B cell (primary cell): ENCODE measurements at regions of chr3 and their contacts with region 1.

Region 1: GRCh38 chr3:36957862-36958686 is 13.2 kb upstream of the TRANK1 start:
- DNase-seq: no peak
- ATAC-seq: no peak
- H3K4me3 ChIP-seq: no peak overlapping the region
- H3K4me3 Mint-ChIP-seq: no peak overlapping the region
- H3K27ac ChIP-seq: no peak overlapping the region
- H3K27ac Mint-ChIP-seq: peak overlapping the region; percentile 51
- H3K4me1 ChIP-seq: peaks cover 0 to 4% of the 10 kb centered on the region in 2 donors
- H3K4me1 Mint-ChIP-seq: peaks cover 13% of the 10 kb centered on the region
- H3K27me3 ChIP-seq: no peaks in the 10 kb centered on the region
- H3K27me3 Mint-ChIP-seq: no peaks in the 10 kb centered on the region
- CTCF ChIP-seq: no peak

Region 2: GRCh38 chr3:36792342-36792741 is 165.7 kb before region 1 on chr3:
- CTCF ChIA-PET with region 1: interaction called, 5 read pairs
- POLR2A ChIA-PET with region 1: no interaction called
- intact Hi-C with region 1: loop called (anchors 1 kb)
- DNase-seq: peak; percentile 25
- ATAC-seq: no peak
- H3K4me3 ChIP-seq: no peak overlapping the region
- H3K4me3 Mint-ChIP-seq: no peak overlapping the region
- H3K27ac ChIP-seq: no peak overlapping the region
- H3K27ac Mint-ChIP-seq: no peak overlapping the region
- H3K4me1 ChIP-seq: no peaks in the 10 kb centered on the region
- H3K4me1 Mint-ChIP-seq: no peaks in the 10 kb centered on the region
- H3K27me3 ChIP-seq: no peaks in the 10 kb centered on the region
- H3K27me3 Mint-ChIP-seq: peaks cover 9% of the 10 kb centered on the region
- CTCF ChIP-seq: no peak

Region 3: GRCh38 chr3:36868614-36869436 is 89.2 kb before region 1 on chr3:
- CTCF ChIA-PET with region 1: interaction called, 84 read pairs
- POLR2A ChIA-PET with region 1: interaction called, 3 read pairs
- intact Hi-C with region 1: loop called (anchors 1 kb)
- DNase-seq: peak; percentile 77
- ATAC-seq: peak; percentile 73
- H3K4me3 ChIP-seq: no peak overlapping the region
- H3K4me3 Mint-ChIP-seq: no peak overlapping the region
- H3K27ac ChIP-seq: no peak overlapping the region
- H3K27ac Mint-ChIP-seq: peak overlapping the region; percentile 0
- H3K4me1 ChIP-seq: peaks cover 5 to 13% of the 10 kb centered on the region in 2 donors
- H3K4me1 Mint-ChIP-seq: peaks cover 22% of the 10 kb centered on the region
- H3K27me3 ChIP-seq: no peaks in the 10 kb centered on the region
- H3K27me3 Mint-ChIP-seq: no peaks in the 10 kb centered on the region
- CTCF ChIP-seq: peak; percentile 90

Region 4: DNA sequence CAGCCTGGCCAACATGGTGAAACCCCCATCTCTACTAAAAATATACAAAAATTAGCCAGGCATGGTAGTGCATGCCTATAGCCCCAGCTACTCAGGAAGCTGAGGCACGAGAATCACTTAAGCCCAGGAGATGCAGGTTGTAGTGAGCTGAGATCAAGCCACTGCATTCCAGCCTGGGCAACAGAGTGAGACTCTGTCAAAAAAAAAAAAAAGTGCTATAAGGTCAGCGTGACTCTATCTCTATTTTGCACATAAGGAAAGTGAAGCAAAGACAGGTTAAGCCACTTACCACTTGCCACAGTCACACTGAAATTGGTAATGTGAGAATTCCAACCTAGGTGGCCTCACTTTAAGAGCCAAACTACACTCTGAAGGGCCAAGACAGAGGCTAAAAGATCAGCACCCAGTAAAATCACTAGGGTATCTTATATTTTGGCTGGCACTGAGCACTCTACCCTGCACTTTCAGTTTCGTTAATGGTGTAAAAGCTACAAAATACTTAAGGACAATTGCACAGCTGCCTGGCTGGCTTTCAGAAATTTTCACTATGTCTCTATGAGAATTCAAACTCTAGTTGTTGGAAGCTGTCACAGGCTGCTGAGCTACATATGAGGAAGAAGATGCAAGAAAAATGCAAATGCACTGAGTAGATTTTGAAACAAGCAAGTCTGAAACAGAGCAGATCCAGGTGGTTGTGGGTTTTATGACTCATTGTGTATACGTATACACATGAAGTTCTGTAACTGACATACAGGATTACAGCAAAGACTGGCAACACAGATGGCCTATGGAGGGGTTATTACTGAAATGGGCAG is 45.9 kb before region 1 on chr3:
- CTCF ChIA-PET with region 1: interaction called, 128 read pairs
- POLR2A ChIA-PET with region 1: interaction called, 5 read pairs
- intact Hi-C with region 1: loop called (anchors 1 kb)
- DNase-seq: peak; percentile 88
- ATAC-seq: peak; percentile 83
- H3K4me3 ChIP-seq: peak overlapping the region in 4 of 5 experiments; percentile 9 to 35 (median 18)
- H3K4me3 Mint-ChIP-seq: peak overlapping the region; percentile 35
- H3K27ac ChIP-seq: peak overlapping the region; percentile 90 to 91
- H3K27ac Mint-ChIP-seq: peak overlapping the region; percentile 84
- H3K4me1 ChIP-seq: peaks cover 35 to 51% of the 10 kb centered on the region in 2 donors
- H3K4me1 Mint-ChIP-seq: peaks cover 53% of the 10 kb centered on the region
- H3K27me3 ChIP-seq: no peaks in the 10 kb centered on the region
- H3K27me3 Mint-ChIP-seq: no peaks in the 10 kb centered on the region
- CTCF ChIP-seq: no peak

Region 5: GRCh38 chr3:36969540-36970432 is 11.7 kb after region 1 on chr3:
- CTCF ChIA-PET with region 1: interaction called, 27 read pairs
- POLR2A ChIA-PET with region 1: interaction called, 3 read pairs
- intact Hi-C with region 1: no loop called
- DNase-seq: peak; percentile 83
- ATAC-seq: peak; percentile 98
- H3K4me3 ChIP-seq: no peak overlapping the region
- H3K4me3 Mint-ChIP-seq: peak overlapping the region; percentile 36
- H3K27ac ChIP-seq: peak overlapping the region; percentile 74 to 84
- H3K27ac Mint-ChIP-seq: peak overlapping the region; percentile 91
- H3K4me1 ChIP-seq: peaks cover 21 to 25% of the 10 kb centered on the region in 2 donors
- H3K4me1 Mint-ChIP-seq: peaks cover 26% of the 10 kb centered on the region
- H3K27me3 ChIP-seq: no peaks in the 10 kb centered on the region
- H3K27me3 Mint-ChIP-seq: no peaks in the 10 kb centered on the region
- CTCF ChIP-seq: no peak

Region 6: GRCh38 chr3:37198996-37199395 is 240.9 kb after region 1 on chr3:
- CTCF ChIA-PET with region 1: no interaction called
- POLR2A ChIA-PET with region 1: no interaction called
- intact Hi-C with region 1: no loop called
- DNase-seq: no peak
- ATAC-seq: no peak
- H3K4me3 ChIP-seq: no peak overlapping the region
- H3K4me3 Mint-ChIP-seq: no peak overlapping the region
- H3K27ac ChIP-seq: no peak overlapping the region
- H3K27ac Mint-ChIP-seq: no peak overlapping the region
- H3K4me1 ChIP-seq: no peaks in the 10 kb centered on the region
- H3K4me1 Mint-ChIP-seq: no peaks in the 10 kb centered on the region
- H3K27me3 ChIP-seq: no peaks in the 10 kb centered on the region
- H3K27me3 Mint-ChIP-seq: peaks cover 4% of the 10 kb centered on the region
- CTCF ChIP-seq: no peak

Region 7: GRCh38 chr3:37770938-37771918 is 813.2 kb after region 1 on chr3:
- CTCF ChIA-PET with region 1: no interaction called
- POLR2A ChIA-PET with region 1: no interaction called
- intact Hi-C with region 1: no loop called
- DNase-seq: no peak
- ATAC-seq: no peak
- H3K4me3 ChIP-seq: no peak overlapping the region
- H3K4me3 Mint-ChIP-seq: no peak overlapping the region
- H3K27ac ChIP-seq: no peak overlapping the region
- H3K27ac Mint-ChIP-seq: no peak overlapping the region
- H3K4me1 ChIP-seq: no peaks in the 10 kb centered on the region
- H3K4me1 Mint-ChIP-seq: no peaks in the 10 kb centered on the region
- H3K27me3 ChIP-seq: peaks cover 0 to 6% (median 0%) of the 10 kb centered on the region in 4 experiments
- H3K27me3 Mint-ChIP-seq: peaks cover 5% of the 10 kb centered on the region
- CTCF ChIP-seq: no peak